ENCODE measurements at regions of chr7 and their contacts with region 1.

Region 1: GRCh38 chr7:120792091-120792860 is 65.7 kb downstream of the TSPAN12 start:
- DNase-seq: peak; percentile 70 to 79
- ATAC-seq: peak; percentile 74 to 93 (median 86)
- H3K4me3 ChIP-seq: no peak overlapping the region
- H3K27ac ChIP-seq: no peak overlapping the region
- H3K4me1 ChIP-seq: peaks cover 0 to 47% (median 16%) of the 10 kb centered on the region in 9 donors
- H3K27me3 ChIP-seq: no peaks in the 10 kb centered on the region
- CTCF ChIP-seq: peak; percentile 68 to 93 (median 85)

Region 2: GRCh38 chr7:120941064-120941463 is 148.8 kb after region 1 on chr7:
- intact Hi-C with region 1: loop called in 2 of 10 experiments (anchors 5 kb)
- DNase-seq: no peak
- ATAC-seq: peak in 2 of 8 donors; percentile 51 to 64
- H3K4me3 ChIP-seq: no peak overlapping the region
- H3K27ac ChIP-seq: peak overlapping the region in 2 of 10 donors; percentile 22 to 23
- H3K4me1 ChIP-seq: peaks cover 0 to 9% (median 0%) of the 10 kb centered on the region in 9 donors
- H3K27me3 ChIP-seq: no peaks in the 10 kb centered on the region
- CTCF ChIP-seq: peak in 7 of 9 donors; percentile 30 to 63 (median 51)

Region 3: GRCh38 chr7:121081327-121081936 is 289.2 kb after region 1 on chr7:
- intact Hi-C with region 1: loop called in 1 of 10 experiments (anchors 10 kb)
- DNase-seq: no peak
- ATAC-seq: peak in 7 of 8 donors; percentile 49 to 62 (median 58)
- H3K4me3 ChIP-seq: no peak overlapping the region
- H3K27ac ChIP-seq: peak overlapping the region in 2 of 10 donors; percentile 31 to 34
- H3K4me1 ChIP-seq: peaks cover 0 to 60% (median 41%) of the 10 kb centered on the region in 9 donors
- H3K27me3 ChIP-seq: no peaks in the 10 kb centered on the region
- CTCF ChIP-seq: peak; percentile 64 to 84 (median 78)